ENCODE measurements at regions of chr11 and their contacts with region 1.

Region 1: DNA sequence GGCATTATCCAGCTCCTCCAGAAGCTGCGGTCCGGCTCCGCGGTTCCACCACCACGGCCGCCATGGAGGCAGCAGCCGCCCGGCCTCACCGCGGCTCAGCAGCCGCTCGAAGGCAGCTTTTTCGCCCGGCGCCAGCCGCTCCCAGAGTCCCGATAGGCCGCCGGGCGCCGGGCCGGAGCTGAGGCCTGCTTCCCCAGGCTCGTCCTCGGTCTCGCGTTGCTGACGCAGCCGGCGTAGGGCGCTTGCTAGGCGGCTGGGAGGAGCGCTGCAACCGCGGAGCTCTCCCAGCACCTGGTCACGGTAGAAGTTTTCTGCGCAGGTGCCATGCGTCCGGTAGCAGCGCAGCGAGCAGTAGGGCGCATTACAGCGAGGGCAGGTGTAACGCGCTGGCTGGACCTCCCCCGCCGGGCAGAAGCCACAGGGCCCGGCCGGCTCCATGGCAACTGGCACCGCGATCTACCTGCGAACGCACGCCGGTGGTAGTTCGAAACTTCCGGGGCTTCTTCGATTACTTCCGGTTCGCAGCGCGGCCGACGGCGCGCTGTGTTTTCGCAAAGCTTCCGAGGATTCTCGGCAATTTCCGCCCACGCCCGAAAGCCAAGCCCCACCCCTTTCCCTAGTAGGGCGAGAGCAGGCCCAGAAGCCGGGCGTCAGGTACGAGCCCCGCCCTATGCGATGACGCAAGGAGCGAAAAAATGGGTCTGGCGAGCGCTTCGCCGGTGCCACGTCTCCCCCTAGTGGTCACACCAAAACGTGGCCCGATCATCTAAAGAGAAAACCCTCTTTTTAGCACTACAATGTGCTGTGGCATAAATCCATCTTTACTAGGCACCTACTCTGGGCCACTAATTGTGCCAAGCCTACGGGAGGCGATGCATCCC is at the start of gene ZNHIT2:
- DNase-seq: peak; percentile 99 to 100
- H3K4me3 ChIP-seq: peak within 1 kb of the TSS; percentile 61 to 81
- H3K27ac ChIP-seq: peak within 1 kb of the TSS; percentile 76 to 85
- H3K4me1 ChIP-seq: peaks cover 9 to 42% (median 38%) of the 10 kb centered on the region in 4 donors
- H3K27me3 ChIP-seq: no peaks in the 10 kb centered on the region
- CTCF ChIP-seq: peak; percentile 93 to 96

Region 2: DNA sequence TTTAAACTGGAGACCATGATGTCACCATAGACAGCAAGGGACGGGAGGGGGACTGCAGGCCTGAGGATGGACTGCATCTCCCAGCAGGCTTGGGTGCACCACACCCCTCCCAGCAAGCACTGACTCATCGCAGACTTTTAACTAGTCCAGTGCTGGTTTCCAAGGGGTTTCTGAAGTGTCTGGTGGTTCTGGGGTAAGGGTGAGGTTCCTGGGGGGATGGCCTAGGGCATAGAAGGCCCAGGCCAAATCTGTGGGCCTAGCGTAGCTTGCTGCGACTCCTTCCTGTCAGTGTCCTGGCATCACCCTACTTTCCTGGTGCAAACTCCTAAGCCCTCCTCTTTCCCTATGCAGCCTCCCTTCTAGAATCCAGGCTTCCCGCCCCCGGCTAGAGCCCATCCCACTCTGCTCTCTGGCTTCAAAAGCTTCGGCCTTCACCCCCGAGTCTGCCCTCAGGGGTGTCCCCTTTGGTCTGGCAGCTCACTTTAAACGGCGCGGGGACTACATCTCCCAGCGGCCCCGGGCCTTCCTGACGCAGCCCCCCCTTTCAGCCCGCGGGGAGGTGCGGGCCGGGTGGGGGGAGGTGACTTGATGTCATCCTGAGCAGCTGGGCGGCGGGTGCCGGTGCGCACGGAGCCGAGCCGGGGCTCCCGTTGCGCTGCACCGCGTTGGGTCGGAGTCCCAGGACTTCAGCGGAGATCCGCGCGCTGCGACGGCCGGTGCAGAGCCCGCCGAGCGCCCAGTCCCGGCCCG is 193.2 kb before region 1 on chr11 and contains the start of gene PPP2R5B:
- intact Hi-C with region 1: loop called (anchors 10 kb)
- DNase-seq: peak; percentile 96 to 97
- H3K4me3 ChIP-seq: peak within 1 kb of the TSS; percentile 84 to 97
- H3K27ac ChIP-seq: peak within 1 kb of the TSS; percentile 93
- H3K4me1 ChIP-seq: peaks cover 0 to 24% (median 21%) of the 10 kb centered on the region in 4 donors
- H3K27me3 ChIP-seq: no peaks in the 10 kb centered on the region
- CTCF ChIP-seq: no peak

Region 3: GRCh38 chr11:65013692-65014145 is 103.7 kb before region 1 on chr11:
- intact Hi-C with region 1: loop called (anchors 5 kb)
- DNase-seq: peak; percentile 89 to 95
- H3K4me3 ChIP-seq: peak overlapping the region; percentile 68 to 70
- H3K27ac ChIP-seq: peak overlapping the region; percentile 94 to 95
- H3K4me1 ChIP-seq: peaks cover 6 to 23% (median 19%) of the 10 kb centered on the region in 4 donors
- H3K27me3 ChIP-seq: no peaks in the 10 kb centered on the region
- CTCF ChIP-seq: peak in 1 of 2 experiments; percentile 89